ENCODE measurements at regions of chr6 and their contacts with region 1.

Region 1: DNA sequence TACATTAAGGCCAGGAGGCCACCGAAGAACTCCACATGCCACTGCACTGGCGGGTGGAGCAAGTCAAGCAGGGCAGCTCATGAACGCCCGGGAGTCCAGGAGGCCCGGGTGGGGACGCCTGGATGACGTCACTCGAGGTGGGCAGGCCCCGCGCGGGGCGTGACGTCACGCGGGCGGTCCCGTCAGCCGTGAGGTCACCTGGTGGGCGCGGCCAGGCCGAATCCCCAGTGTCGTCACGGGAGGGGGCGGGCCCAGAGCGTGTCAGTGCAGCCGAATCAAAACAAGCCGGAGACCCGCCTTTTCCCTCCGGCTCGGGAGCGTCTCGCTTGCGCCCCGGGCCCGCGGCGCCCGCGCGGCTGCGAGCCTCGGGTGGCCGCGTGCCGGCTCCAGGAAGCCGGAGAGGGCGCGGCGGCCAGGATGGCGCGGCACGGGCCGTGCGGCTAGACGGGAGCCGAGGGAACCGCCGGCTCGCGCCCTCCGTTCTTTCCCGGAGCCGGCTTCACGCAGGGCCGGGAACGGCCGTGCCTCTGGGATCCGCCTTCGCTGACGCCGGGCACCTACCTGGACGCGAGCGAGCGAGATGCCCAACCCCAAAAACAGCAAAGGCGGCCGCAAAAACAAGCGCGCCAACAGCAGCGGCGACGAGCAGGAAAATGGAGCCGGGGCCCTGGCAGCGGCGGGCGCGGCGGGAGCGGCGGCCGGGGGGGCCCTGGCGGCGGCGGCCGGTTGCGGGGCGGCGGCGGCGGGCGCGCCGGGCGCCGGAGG is at the start of gene HECA:
- DNase-seq: peak; percentile 92 to 98
- H3K4me3 ChIP-seq: peak within 1 kb of the TSS; percentile 99
- H3K27ac ChIP-seq: peak within 1 kb of the TSS; percentile 95 to 99
- H3K4me1 ChIP-seq: peaks cover 0 to 12% of the 10 kb centered on the region in 2 donors
- H3K27me3 ChIP-seq: no peaks in the 10 kb centered on the region
- CTCF ChIP-seq: no peak
- total RNA-seq, gene HECA: 27.0 TPM

Region 2: GRCh38 chr6:138773177-138774091 is 361.6 kb before region 1 on chr6 and contains the start of gene CCDC28A:
- intact Hi-C with region 1: loop called (anchors 2 kb)
- DNase-seq: peak; percentile 81 to 97
- H3K4me3 ChIP-seq: peak within 1 kb of the TSS; percentile 67 to 92
- H3K27ac ChIP-seq: peak within 1 kb of the TSS; percentile 84 to 96
- H3K4me1 ChIP-seq: peaks cover 0 to 17% of the 10 kb centered on the region in 2 donors
- H3K27me3 ChIP-seq: no peaks in the 10 kb centered on the region
- CTCF ChIP-seq: no peak
- total RNA-seq, gene CCDC28A: 0.32 TPM

Region 3: DNA sequence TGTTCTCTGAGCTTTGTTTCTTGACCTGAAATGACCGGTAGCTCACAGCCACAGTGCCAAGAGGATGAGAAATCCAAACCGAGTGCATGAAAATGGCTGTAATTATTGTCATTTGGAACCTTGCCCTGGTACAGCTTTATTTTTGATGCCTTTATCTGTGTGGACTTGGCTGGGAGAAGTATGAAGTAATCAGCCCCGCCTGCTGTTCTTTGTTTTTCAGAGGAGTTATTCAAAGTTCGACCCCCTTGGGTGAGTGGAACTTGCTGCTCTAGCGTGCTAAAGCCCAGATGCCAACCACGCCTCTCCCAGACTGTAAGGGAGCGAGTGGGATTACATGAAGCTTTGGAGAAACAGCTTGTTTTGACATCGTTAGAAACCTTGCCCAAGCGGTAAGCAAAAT is 290.8 kb before region 1 on chr6:
- intact Hi-C with region 1: no loop called
- DNase-seq: no peak
- H3K4me3 ChIP-seq: no peak overlapping the region
- H3K27ac ChIP-seq: no peak overlapping the region
- H3K4me1 ChIP-seq: no peaks in the 10 kb centered on the region
- H3K27me3 ChIP-seq: no peaks in the 10 kb centered on the region
- CTCF ChIP-seq: no peak

Region 4: GRCh38 chr6:138987640-138988468 is 147.1 kb before region 1 on chr6 and contains the start of gene REPS1:
- intact Hi-C with region 1: loop called (anchors 2 kb)
- DNase-seq: peak; percentile 51 to 96
- H3K4me3 ChIP-seq: peak within 1 kb of the TSS; percentile 90 to 98
- H3K27ac ChIP-seq: peak within 1 kb of the TSS; percentile 85 to 91
- H3K4me1 ChIP-seq: peaks cover 0 to 18% of the 10 kb centered on the region in 2 donors
- H3K27me3 ChIP-seq: no peaks in the 10 kb centered on the region
- CTCF ChIP-seq: peak; percentile 92 to 98 (median 98)
- total RNA-seq, gene REPS1: 30.4 TPM

Region 5: DNA sequence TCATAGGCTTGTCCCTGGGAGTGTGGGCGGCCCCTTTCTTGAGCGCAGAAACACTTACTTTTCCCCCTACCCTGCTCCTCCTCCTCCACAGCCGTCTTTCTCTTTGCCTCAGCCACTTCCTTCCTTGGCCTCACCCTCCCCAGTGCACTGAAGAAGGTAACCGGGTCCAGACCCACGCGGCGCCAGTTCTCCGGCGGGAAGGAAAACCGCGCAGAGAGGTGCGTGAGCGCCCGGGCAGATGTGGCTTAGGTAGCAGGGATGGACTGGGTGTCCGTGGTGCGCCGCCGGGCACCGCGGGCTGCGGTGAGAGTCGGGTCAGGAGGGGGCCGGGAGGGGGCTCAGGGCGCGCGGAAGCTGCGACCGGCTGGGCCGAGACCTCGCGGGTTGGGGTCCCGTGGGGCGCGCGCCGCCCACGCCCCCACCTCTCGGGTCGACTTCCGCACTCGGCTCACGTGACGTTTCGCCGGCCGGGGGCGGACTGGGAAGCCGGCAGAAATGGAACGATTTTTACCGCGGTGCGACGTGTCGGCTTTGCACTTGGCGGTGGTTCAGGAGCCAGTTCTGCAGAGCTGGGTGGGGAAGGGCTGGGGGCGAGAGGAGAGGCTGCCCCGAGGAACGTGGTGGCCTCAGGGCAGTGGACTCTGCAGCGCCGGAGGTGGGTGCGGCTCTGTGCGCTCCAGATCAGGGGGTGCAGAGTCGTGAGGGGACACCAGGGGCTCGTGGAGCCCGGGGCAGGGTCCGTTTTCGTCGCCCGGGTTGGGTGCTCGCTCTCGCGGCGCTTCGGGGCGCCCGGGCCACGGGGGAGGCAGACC is 106.1 kb before region 1 on chr6 and contains the start of gene ABRACL:
- intact Hi-C with region 1: loop called (anchors 1 kb)
- DNase-seq: peak; percentile 19 to 82
- H3K4me3 ChIP-seq: peak within 1 kb of the TSS; percentile 72 to 90
- H3K27ac ChIP-seq: peak within 1 kb of the TSS; percentile 72 to 91
- H3K4me1 ChIP-seq: peaks cover 5 to 7% of the 10 kb centered on the region in 2 donors
- H3K27me3 ChIP-seq: no peaks in the 10 kb centered on the region
- CTCF ChIP-seq: no peak
- total RNA-seq, gene ABRACL: 27.6 TPM

Region 6: DNA sequence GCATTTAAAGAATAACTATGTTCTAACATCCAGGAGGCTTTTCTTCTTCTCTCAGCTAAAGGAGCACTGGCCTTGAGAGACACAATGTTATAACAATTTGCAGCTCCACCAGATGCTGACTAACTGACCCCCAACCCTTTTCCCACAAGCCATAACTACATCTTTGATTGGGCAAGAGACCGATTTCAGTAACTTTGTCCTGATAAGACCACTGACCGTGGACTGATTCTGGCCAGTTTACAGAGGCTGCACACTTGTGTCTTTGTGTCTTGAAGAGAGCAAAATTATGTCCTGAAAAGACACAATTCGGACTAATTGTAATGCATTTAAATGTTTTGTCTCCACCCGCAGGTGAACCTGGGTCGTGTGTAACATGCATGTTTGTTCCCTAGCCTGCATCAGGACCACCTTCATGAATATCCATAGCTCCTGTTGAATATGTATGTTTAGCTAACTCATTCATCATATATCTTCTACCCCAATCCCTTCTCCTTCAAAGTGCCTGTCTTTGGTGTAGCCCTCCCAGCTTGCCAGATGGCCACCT is 84.2 kb before region 1 on chr6:
- intact Hi-C with region 1: no loop called
- DNase-seq: no peak
- H3K4me3 ChIP-seq: no peak overlapping the region
- H3K27ac ChIP-seq: peak overlapping the region; percentile 17 to 46
- H3K4me1 ChIP-seq: no peaks in the 10 kb centered on the region
- H3K27me3 ChIP-seq: no peaks in the 10 kb centered on the region
- CTCF ChIP-seq: no peak

Region 7: DNA sequence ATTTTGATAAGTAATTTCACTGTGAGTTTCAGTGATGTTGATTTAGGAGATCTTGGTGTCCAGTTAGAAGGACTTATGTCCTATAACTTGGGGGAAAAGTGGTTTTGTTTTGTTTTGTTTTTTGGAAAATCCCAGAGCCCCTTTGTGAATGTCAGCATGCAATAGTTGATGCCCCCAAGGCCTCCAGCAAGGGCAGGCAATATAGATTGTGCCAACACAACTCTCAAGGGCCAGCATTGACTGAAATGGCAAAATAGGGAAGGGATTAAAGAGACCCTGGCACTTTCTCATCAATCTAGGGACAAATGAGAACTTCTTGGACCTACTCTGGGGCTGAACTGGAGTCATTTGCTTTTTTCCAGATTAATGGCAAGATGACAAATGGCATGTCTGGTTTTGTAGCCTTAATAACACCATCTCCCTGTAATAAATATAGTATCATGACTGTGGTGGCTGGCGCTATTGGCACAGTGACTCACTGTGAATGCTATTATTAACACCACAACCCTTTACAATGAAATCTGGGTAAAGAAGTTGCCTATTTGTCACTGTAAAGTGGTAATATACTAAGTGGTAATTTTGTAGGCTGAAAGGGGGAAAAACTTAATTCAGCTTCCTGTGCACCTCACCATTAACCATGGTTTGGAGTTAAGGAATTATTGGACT is 54.6 kb before region 1 on chr6:
- intact Hi-C with region 1: loop called (anchors 1 kb)
- DNase-seq: peak in 1 of 2 donors; percentile 69
- H3K4me3 ChIP-seq: no peak overlapping the region
- H3K27ac ChIP-seq: peak overlapping the region; percentile 79 to 83
- H3K4me1 ChIP-seq: peaks cover 11 to 20% of the 10 kb centered on the region in 2 donors
- H3K27me3 ChIP-seq: no peaks in the 10 kb centered on the region
- CTCF ChIP-seq: no peak

Region 8: GRCh38 chr6:139186242-139186641 is 51.2 kb after region 1 on chr6:
- intact Hi-C with region 1: no loop called
- DNase-seq: no peak
- H3K4me3 ChIP-seq: no peak overlapping the region
- H3K27ac ChIP-seq: no peak overlapping the region
- H3K4me1 ChIP-seq: no peaks in the 10 kb centered on the region
- H3K27me3 ChIP-seq: no peaks in the 10 kb centered on the region
- CTCF ChIP-seq: no peak

Region 9: GRCh38 chr6:139334806-139335446 is 199.9 kb after region 1 on chr6:
- intact Hi-C with region 1: loop called (anchors 10 kb)
- DNase-seq: no peak
- H3K4me3 ChIP-seq: no peak overlapping the region
- H3K27ac ChIP-seq: peak overlapping the region; percentile 69 to 71
- H3K4me1 ChIP-seq: peaks cover 4 to 15% of the 10 kb centered on the region in 2 donors
- H3K27me3 ChIP-seq: no peaks in the 10 kb centered on the region
- CTCF ChIP-seq: no peak

Region 10: GRCh38 chr6:139369568-139370282 is 234.7 kb after region 1 on chr6:
- intact Hi-C with region 1: loop called (anchors 5 kb)
- DNase-seq: no peak
- H3K4me3 ChIP-seq: peak overlapping the region; percentile 69 to 75
- H3K27ac ChIP-seq: peak overlapping the region; percentile 67 to 92
- H3K4me1 ChIP-seq: peaks cover 0 to 16% of the 10 kb centered on the region in 2 donors
- H3K27me3 ChIP-seq: no peaks in the 10 kb centered on the region
- CTCF ChIP-seq: peak; percentile 44 to 76 (median 66)